Psoas muscle (tissue), 8 donors: ENCODE measurements at regions of chr1 and their contacts with region 1.

Region 1: GRCh38 chr1:217181756-217182155 is 449.1 kb downstream of the GPATCH2 start:
- DNase-seq: no peak
- ATAC-seq: no peak
- H3K4me3 ChIP-seq: no peak overlapping the region
- H3K27ac ChIP-seq: no peak overlapping the region
- H3K4me1 ChIP-seq: no peaks in the 10 kb centered on the region
- H3K27me3 ChIP-seq: no peaks in the 10 kb centered on the region
- CTCF ChIP-seq: no peak

Region 2: GRCh38 chr1:216466162-216466801 is 715.5 kb before region 1 on chr1:
- intact Hi-C with region 1: loop called in 1 of 2 experiments (anchors 5 kb)
- DNase-seq: no peak
- ATAC-seq: no peak
- H3K4me3 ChIP-seq: no peak overlapping the region
- H3K27ac ChIP-seq: no peak overlapping the region
- H3K4me1 ChIP-seq: no peaks in the 10 kb centered on the region
- H3K27me3 ChIP-seq: no peaks in the 10 kb centered on the region
- CTCF ChIP-seq: no peak

Region 3: GRCh38 chr1:216779686-216780085 is 402.1 kb before region 1 on chr1:
- intact Hi-C with region 1: no loop called
- DNase-seq: no peak
- ATAC-seq: no peak
- H3K4me3 ChIP-seq: no peak overlapping the region
- H3K27ac ChIP-seq: no peak overlapping the region
- H3K4me1 ChIP-seq: no peaks in the 10 kb centered on the region
- H3K27me3 ChIP-seq: no peaks in the 10 kb centered on the region
- CTCF ChIP-seq: no peak

Region 4: GRCh38 chr1:217004776-217005436 is 176.8 kb before region 1 on chr1:
- intact Hi-C with region 1: no loop called
- DNase-seq: no peak
- ATAC-seq: no peak
- H3K4me3 ChIP-seq: no peak overlapping the region
- H3K27ac ChIP-seq: no peak overlapping the region
- H3K4me1 ChIP-seq: no peaks in the 10 kb centered on the region
- H3K27me3 ChIP-seq: no peaks in the 10 kb centered on the region
- CTCF ChIP-seq: no peak

Region 5: DNA sequence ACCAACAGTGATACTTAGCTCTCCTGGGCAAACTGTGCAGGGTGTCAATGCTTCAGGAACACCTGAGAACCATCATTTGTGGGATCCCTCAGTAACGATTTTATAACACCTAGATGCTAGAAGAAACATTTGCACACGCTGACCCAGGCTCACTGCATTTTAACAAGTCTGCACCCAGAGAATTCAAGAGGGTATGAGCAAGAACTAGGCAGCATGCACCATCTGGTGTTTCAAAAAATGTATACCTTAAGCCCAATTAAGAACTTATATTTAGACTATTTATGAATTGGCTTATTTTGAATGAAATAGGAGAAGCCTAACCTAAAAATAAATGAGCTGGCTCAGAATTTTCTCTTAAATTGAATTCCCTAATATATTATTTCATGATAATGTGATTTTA is 48.7 kb after region 1 on chr1:
- intact Hi-C with region 1: no loop called
- DNase-seq: no peak
- ATAC-seq: no peak
- H3K4me3 ChIP-seq: no peak overlapping the region
- H3K27ac ChIP-seq: no peak overlapping the region
- H3K4me1 ChIP-seq: no peaks in the 10 kb centered on the region
- H3K27me3 ChIP-seq: no peaks in the 10 kb centered on the region
- CTCF ChIP-seq: no peak

Region 6: DNA sequence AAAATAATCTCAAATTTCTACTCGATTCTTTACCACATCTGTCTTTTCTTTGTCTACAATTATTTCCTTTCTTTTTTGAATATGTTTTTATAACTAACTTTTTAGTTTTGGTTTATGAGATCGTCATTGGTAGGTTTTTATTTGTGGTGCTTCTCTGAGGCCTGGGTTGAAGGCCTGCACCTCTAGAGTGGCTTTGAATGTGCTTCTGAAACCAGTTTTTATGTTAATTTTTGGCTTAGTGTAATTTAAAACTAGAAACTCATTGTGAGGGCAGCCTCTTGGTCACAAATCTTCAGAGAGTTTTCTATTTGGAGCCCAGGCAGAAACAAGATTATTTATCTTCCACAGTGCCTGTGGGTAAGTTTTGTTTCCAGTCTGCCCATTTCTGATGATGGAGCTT is 262.1 kb after region 1 on chr1:
- intact Hi-C with region 1: no loop called
- DNase-seq: no peak
- ATAC-seq: no peak
- H3K4me3 ChIP-seq: no peak overlapping the region
- H3K27ac ChIP-seq: no peak overlapping the region
- H3K4me1 ChIP-seq: no peaks in the 10 kb centered on the region
- H3K27me3 ChIP-seq: no peaks in the 10 kb centered on the region
- CTCF ChIP-seq: no peak